Right ventricle myocardium superior (tissue), 1 donor: ENCODE measurements at regions of chr11 and their contacts with region 1.

Region 1: GRCh38 chr11:95764267-95764898 is 25.2 kb downstream of the FAM76B start:
- DNase-seq: no peak
- ATAC-seq: peak; percentile 69

Region 2: GRCh38 chr11:95067039-95067840 is 697.1 kb before region 1 on chr11:
- intact Hi-C with region 1: loop called (anchors 10 kb)
- DNase-seq: peak; percentile 92
- ATAC-seq: peak; percentile 92